Heart right ventricle (tissue), 16 donors: ENCODE measurements at regions of chr2 and their contacts with region 1.

Region 1: DNA sequence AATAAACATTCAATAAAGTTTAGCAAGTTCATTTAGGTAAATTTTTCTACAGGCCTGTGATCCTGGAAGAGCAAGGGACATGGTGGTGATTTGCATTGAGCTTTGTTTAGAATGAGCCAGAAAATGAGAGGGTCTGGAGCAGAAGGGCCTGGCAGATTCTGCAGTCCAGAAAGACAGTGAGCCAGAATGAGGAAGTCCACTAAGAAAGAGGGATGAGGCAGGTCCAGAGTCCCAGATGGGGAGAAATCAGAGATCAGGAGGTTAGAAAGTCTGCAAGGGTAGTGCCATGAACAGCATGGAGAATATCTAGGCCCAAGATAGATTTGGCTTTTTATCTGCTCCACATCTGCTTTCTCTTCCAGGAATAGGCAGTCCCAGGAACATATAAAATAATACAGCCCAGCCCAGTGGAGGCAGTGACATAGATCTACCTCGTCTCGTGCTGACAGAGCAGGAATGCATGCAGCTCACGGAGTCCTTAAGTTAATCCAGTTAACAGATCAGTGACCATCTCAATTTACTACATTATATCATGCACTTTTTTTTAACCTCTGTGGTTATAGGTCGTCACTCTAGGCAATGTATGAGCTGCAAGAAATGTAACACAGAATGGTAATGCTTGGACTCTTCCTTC is 429.1 kb downstream of the SUCLG1 start:
- DNase-seq: no peak
- ATAC-seq: no peak
- H3K4me3 ChIP-seq: no peak overlapping the region
- H3K27ac ChIP-seq: no peak overlapping the region
- H3K4me1 ChIP-seq: no peaks in the 10 kb centered on the region
- H3K27me3 ChIP-seq: no peaks in the 10 kb centered on the region
- CTCF ChIP-seq: no peak

Region 2: DNA sequence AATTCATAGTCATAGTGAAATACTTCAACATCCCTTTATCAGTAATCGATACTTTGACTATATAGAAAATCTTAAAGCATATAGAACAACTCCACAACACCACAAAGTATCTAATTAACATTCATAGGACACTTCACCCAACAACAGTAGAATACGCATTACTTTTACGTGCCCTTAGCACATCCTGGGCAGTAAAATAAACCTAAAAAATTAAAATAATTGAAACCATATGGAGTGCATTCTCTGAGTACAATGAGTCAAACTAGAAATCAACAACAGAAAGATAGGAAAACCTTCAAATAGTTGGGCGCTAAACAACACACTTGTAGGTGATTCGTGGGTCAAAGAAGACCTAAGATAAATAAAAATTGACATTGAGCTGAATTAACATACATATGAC is 13.8 kb before region 1 on chr2:
- intact Hi-C with region 1: loop called in 1 of 10 experiments (anchors 1 kb)
- DNase-seq: no peak
- ATAC-seq: no peak
- H3K4me3 ChIP-seq: no peak overlapping the region
- H3K27ac ChIP-seq: no peak overlapping the region
- H3K4me1 ChIP-seq: no peaks in the 10 kb centered on the region
- H3K27me3 ChIP-seq: no peaks in the 10 kb centered on the region
- CTCF ChIP-seq: no peak

Region 3: GRCh38 chr2:84314901-84315330 is 284.9 kb after region 1 on chr2:
- intact Hi-C with region 1: loop called in 3 of 10 experiments (anchors 5 to 10 kb)
- DNase-seq: peak; percentile 71 to 73
- ATAC-seq: peak; percentile 71 to 95 (median 82)
- H3K4me3 ChIP-seq: no peak overlapping the region
- H3K27ac ChIP-seq: no peak overlapping the region
- H3K4me1 ChIP-seq: no peaks in the 10 kb centered on the region
- H3K27me3 ChIP-seq: peaks cover 0 to 31% (median 19%) of the 10 kb centered on the region in 7 donors
- CTCF ChIP-seq: peak; percentile 58 to 88 (median 82)